ENCODE measurements at regions of chr5 and their contacts with region 1.

Region 1: DNA sequence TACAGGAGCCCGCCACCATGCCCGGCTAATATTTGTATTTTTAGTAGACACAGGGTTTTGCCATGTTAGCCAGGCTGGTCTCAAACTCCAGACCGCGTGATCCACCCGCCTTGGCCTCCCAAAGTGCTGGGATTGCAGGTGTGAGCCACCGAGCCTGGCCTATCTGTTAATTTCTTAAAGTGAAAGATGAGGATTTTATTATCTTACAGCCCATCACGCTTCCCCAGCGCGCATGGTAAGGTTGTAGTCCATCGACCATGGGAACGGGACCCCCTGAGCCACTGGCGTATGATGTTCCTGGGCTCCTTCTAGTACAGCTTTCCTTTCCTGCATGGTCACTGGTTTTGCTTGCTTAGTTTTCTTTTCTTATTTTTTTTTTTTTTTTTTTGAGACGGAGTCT is 8.7 kb downstream of the CDHR2 start:
- DNase-seq: no peak
- ATAC-seq: no peak
- H3K4me3 Mint-ChIP-seq: no peak overlapping the region
- H3K27ac Mint-ChIP-seq: no peak overlapping the region
- H3K4me1 Mint-ChIP-seq: peaks cover 50% of the 10 kb centered on the region
- H3K27me3 Mint-ChIP-seq: peaks cover 4% of the 10 kb centered on the region

Region 2: DNA sequence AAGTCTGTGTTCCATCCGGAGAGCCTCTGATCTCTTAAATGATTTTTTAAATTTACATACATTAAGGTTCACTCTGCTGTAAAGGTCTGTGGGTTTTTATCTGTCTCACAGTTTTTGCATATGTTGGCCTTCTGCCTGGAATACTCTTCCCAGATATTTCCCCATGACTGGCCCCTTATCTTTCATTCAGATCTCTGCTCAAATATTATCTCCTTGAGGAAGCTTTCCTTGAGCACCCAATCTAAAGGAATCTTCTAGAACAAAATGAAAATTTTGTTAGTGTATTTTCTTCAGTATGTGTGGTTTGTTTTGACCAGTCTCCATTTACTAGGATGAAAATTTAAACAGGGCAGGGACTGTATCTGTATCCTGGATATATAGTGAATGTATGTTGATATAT is 83.3 kb before region 1 on chr5:
- CTCF ChIA-PET with region 1: no interaction called
- DNase-seq: no peak
- ATAC-seq: no peak
- H3K4me3 Mint-ChIP-seq: no peak overlapping the region
- H3K27ac Mint-ChIP-seq: no peak overlapping the region
- H3K4me1 Mint-ChIP-seq: no peaks in the 10 kb centered on the region
- H3K27me3 Mint-ChIP-seq: no peaks in the 10 kb centered on the region

Region 3: GRCh38 chr5:176543428-176544173 is 14.2 kb before region 1 on chr5:
- CTCF ChIA-PET with region 1: interaction called, 11 read pairs
- DNase-seq: peak; percentile 85
- ATAC-seq: peak; percentile 80
- H3K4me3 Mint-ChIP-seq: peak overlapping the region; percentile 92
- H3K27ac Mint-ChIP-seq: peak overlapping the region; percentile 94
- H3K4me1 Mint-ChIP-seq: peaks cover 54% of the 10 kb centered on the region
- H3K27me3 Mint-ChIP-seq: no peaks in the 10 kb centered on the region

Region 4: GRCh38 chr5:176837707-176838115 is 279.9 kb after region 1 on chr5:
- CTCF ChIA-PET with region 1: no interaction called
- DNase-seq: peak; percentile 88
- ATAC-seq: peak; percentile 99
- H3K4me3 Mint-ChIP-seq: no peak overlapping the region
- H3K27ac Mint-ChIP-seq: no peak overlapping the region
- H3K4me1 Mint-ChIP-seq: no peaks in the 10 kb centered on the region
- H3K27me3 Mint-ChIP-seq: peaks cover 8% of the 10 kb centered on the region

Measured in activated CD8-positive, alpha-beta memory T cell treated with anti-CD3 and anti-CD28 coated beads, Interleukin-2, amount 10 ng/mL, durations not matched to agents 7 days and 5 days (primary cell).